Activated T-helper 1 cell treated with anti-CD3 and anti-CD28 coated beads, Interleukin-12 subunit alpha, Interleukin-12 subunit beta, Interleukin-2, Interleukin-4 antibody, amounts not matched to agents 30 ng/mL and 10 ng/mL and 1 ng/mL, durations not matched to agents 14 hours and 24 hours and 36 hours (primary cell): ENCODE measurements at regions of chr20 and their contacts with region 1.

Region 1: GRCh38 chr20:63739130-63740069 is at the start of gene SLC2A4RG:
- DNase-seq: peak; percentile 68
- H3K4me3 Mint-ChIP-seq: peak within 1 kb of the TSS; percentile 53
- H3K27ac Mint-ChIP-seq: no peak within 1 kb of the TSS
- H3K4me1 Mint-ChIP-seq: peaks cover 11% of the 10 kb centered on the region
- H3K27me3 Mint-ChIP-seq: no peaks in the 10 kb centered on the region
- total RNA-seq, gene SLC2A4RG: 34.7 and 38.3 TPM in 2 replicates

Region 2: DNA sequence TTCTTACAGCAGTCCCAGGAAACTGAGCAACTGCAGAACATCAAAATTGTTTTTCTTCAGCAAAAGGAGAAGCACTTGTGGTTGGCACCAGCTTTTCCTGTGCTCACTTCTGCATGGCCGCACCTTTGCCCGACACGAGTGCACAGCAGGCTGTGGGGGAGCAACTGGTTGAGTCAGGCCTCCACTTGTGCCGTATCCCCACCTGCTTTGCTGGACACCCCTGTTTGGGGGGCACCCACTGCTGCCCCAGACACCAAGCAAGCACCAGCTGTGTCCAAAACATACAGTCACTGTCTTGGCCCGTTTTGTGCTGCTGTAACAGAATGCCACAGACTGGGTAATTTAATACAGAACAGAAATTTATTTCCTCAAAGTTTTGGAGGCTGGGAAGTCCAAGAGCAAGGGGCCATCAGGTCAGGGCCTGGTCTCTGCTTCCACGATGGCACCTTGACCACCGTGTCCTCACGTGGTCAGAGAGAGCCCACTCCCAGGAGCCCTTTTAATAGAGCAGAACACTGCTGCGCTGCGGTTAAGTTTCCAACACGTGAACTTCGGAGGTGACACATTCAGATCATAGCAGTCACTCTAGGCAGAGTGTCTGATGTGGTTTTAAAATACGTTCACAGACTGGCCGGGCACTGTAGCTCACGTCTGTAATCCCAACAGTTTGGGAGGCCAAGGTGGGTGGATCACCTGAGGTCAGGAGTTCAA is 103.8 kb before region 1 on chr20:
- intact Hi-C with region 1: loop called (anchors 5 kb)
- DNase-seq: peak; percentile 69
- H3K4me3 Mint-ChIP-seq: peak overlapping the region; percentile 45
- H3K27ac Mint-ChIP-seq: peak overlapping the region; percentile 87
- H3K4me1 Mint-ChIP-seq: peaks cover 33% of the 10 kb centered on the region
- H3K27me3 Mint-ChIP-seq: peaks cover 2% of the 10 kb centered on the region

Region 3: DNA sequence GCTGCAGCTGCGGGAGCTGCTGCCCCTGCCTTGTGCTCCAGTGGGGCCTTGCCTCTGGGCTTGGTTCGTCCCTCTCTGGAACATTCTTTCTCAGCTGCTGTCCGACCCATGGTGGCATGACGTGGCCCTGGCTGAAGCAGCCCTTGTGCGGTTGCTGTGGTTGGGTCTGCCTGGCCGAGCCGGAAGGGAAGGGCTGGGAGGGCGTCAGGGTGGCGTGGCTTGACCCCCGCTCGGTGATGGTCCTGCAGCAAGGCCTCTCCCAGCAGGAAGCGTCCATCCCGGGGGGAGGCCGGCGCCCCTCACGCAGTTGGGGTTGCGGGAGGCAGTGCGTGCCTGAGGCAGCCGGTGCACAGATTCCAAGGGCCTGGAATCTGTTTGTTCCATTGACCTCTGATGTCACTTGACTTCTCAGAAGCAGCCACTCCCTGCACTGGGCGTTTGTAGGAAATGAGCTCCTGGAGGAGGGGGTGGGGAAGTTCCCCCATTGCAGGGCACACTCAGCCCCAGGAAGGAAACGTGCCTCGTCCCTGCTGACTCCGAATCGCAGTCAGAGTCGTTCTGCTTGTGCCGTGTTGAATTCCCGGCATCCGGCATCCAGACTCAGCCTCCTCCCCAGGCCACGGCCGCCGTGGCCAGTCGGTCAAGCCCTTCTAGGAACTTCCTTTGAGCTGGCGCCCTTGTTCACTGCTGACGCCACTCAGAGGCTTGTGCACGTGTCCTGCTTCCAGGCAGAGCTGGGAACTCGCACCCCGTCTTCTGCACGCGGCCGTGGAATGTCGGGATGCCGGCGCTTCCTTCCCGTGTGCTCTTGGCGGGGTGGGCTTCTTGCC is 52.7 kb before region 1 on chr20:
- intact Hi-C with region 1: no loop called
- DNase-seq: no peak
- H3K4me3 Mint-ChIP-seq: no peak overlapping the region
- H3K27ac Mint-ChIP-seq: no peak overlapping the region
- H3K4me1 Mint-ChIP-seq: no peaks in the 10 kb centered on the region
- H3K27me3 Mint-ChIP-seq: no peaks in the 10 kb centered on the region

Region 4: GRCh38 chr20:63750807-63751470 is 11.5 kb after region 1 on chr20:
- intact Hi-C with region 1: loop called (anchors 1 kb)
- DNase-seq: no peak
- H3K4me3 Mint-ChIP-seq: peak overlapping the region; percentile 49
- H3K27ac Mint-ChIP-seq: peak overlapping the region; percentile 81
- H3K4me1 Mint-ChIP-seq: peaks cover 10% of the 10 kb centered on the region
- H3K27me3 Mint-ChIP-seq: peaks cover 4% of the 10 kb centered on the region

Region 5: DNA sequence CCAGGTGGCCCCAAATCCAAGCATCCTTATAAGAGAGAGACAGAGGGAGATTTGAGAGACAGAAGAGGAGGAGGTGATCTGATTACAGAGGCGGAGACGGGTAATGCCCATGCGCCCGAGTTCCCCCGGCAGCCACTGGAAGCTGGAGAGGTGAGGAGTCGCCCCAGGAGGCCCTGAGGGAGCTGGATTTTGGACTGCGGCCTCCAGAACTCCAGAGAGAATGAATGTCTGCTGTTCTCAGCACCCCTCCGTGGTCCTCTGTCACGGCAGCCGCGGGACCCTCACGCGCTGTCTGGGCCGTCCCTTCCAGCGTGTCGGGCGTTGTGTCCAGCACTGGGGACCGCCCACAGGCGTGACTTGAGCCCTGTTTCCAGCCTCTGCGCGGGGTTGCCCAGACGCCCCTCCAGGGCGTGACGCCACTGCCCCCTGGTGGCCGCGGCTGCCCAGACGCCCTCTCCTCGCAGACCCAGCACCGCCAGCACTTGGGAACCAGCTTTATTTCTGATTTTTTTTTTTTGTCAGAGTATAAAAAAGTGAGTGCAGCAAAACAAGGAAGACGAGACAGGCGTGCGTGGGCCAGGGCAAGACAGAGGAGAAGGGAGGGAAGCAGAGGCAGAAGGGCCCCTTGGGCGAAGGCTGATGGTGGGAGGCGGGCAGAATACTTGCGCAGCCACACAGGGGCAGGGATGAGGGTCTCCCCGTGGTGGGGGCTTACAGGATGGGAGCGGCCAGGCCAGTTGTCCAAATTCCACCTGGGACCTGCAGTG is 234.4 kb after region 1 on chr20:
- intact Hi-C with region 1: loop called (anchors 10 kb)
- DNase-seq: peak; percentile 70
- H3K4me3 Mint-ChIP-seq: no peak overlapping the region
- H3K27ac Mint-ChIP-seq: peak overlapping the region; percentile 71
- H3K4me1 Mint-ChIP-seq: peaks cover 46% of the 10 kb centered on the region
- H3K27me3 Mint-ChIP-seq: peaks cover 2% of the 10 kb centered on the region

Region 6: GRCh38 chr20:64044484-64045247 is 305.3 kb after region 1 on chr20:
- intact Hi-C with region 1: loop called (anchors 5 kb)
- DNase-seq: no peak
- H3K4me3 Mint-ChIP-seq: no peak overlapping the region
- H3K27ac Mint-ChIP-seq: no peak overlapping the region
- H3K4me1 Mint-ChIP-seq: peaks cover 32% of the 10 kb centered on the region
- H3K27me3 Mint-ChIP-seq: peaks cover 26% of the 10 kb centered on the region